ENCODE measurements at regions of chrX and their contacts with region 1.

Region 1: DNA sequence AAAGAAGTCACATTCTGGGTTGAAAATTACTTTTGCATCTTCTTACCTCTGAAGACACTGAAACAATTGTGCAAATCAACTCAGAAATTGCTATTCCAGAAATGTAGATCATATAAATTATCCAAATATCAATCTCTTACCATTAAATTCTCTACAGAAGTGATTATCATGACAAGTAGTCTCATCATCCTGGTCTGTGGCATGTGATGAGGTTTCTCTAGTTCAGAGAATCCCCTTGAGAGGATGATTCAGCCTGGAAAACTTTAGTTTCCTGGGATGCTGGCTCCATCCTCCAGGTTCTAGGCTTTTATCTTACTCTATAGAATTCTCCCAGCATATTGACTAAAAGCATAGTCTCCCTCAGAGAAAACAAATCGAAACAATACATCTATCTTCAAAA is 76.2 kb upstream of the S100G start:
- DNase-seq: no peak
- ATAC-seq: no peak
- H3K4me3 ChIP-seq: no peak overlapping the region
- H3K4me3 Mint-ChIP-seq: no peak overlapping the region
- H3K27ac ChIP-seq: no peak overlapping the region
- H3K27ac Mint-ChIP-seq: no peak overlapping the region
- H3K4me1 ChIP-seq: no peaks in the 10 kb centered on the region
- H3K4me1 Mint-ChIP-seq: peaks cover 0 to 7% (median 0%) of the 10 kb centered on the region in 3 donors
- H3K27me3 ChIP-seq: no peaks in the 10 kb centered on the region
- H3K27me3 Mint-ChIP-seq: peaks cover 0 to 5% of the 10 kb centered on the region in 2 donors

Region 2: GRCh38 chrX:16511776-16512400 is 61.9 kb before region 1 on chrX:
- CTCF ChIA-PET with region 1: no interaction called
- POLR2A ChIA-PET with region 1: interaction called in 1 of 2 experiments, 14 read pairs
- DNase-seq: no peak
- ATAC-seq: no peak
- H3K4me3 ChIP-seq: no peak overlapping the region
- H3K4me3 Mint-ChIP-seq: no peak overlapping the region
- H3K27ac ChIP-seq: no peak overlapping the region
- H3K27ac Mint-ChIP-seq: no peak overlapping the region
- H3K4me1 ChIP-seq: no peaks in the 10 kb centered on the region
- H3K4me1 Mint-ChIP-seq: no peaks in the 10 kb centered on the region
- H3K27me3 ChIP-seq: no peaks in the 10 kb centered on the region
- H3K27me3 Mint-ChIP-seq: peaks cover 0 to 21% of the 10 kb centered on the region in 2 donors